A673 (cell line): ENCODE measurements at regions of chr4 and their contacts with region 1.

Region 1: DNA sequence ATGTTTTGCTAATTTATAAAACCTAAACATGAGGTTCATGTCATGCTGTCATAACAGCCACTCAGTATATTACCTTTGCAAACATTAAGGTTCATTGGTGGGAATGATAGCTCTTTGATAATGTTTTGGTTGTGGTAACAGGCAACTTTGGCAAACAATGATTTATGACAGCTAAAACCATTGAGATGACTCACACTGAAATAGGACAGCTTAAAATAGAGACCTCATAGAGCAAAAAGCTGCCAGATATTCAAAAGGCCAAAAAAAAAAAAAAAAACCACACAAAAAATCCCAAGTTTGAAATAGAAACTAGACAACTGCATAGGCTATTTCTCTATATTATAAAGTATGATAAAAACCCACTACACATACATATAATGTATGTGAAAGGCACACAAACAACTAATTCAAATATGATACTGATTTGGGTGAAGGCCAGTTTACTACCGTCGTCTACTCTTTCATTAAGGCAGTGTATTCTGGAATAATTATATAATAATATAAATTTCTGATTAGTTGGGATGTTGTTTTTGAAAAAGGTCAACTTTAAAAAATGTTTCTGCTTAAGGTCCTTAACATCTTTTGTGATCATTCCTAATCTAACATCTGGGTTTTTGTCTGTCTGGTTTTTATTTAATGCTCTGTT is 646.0 kb upstream of the PITX2 start:
- DNase-seq: peak; percentile 2
- H3K4me3 ChIP-seq: no peak overlapping the region
- H3K27ac ChIP-seq: no peak overlapping the region
- H3K4me1 ChIP-seq: no peaks in the 10 kb centered on the region
- H3K27me3 ChIP-seq: no peaks in the 10 kb centered on the region
- CTCF ChIP-seq: no peak

Region 2: DNA sequence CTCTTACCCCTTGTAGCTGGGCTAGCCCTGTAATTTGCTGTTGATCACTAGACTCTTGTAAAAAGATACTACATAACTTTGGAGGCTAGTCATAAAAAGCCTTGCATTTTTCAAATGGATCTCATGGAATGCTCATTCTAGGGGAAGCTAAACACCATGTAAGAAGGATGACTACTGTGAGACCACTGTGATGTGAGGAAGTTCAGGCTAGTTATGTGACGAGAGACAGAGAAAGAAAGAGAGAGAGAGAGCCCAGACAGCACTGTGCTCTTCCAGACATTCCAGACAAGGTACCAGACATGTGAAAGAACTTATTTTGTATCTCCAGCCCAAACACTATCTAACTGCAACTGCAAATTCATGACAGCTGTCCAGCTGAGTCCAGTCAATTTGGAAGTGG is 241.4 kb before region 1 on chr4:
- CTCF ChIA-PET with region 1: no interaction called
- POLR2A ChIA-PET with region 1: no interaction called
- intact Hi-C with region 1: no loop called
- DNase-seq: no peak
- H3K4me3 ChIP-seq: no peak overlapping the region
- H3K27ac ChIP-seq: no peak overlapping the region
- H3K4me1 ChIP-seq: no peaks in the 10 kb centered on the region
- H3K27me3 ChIP-seq: peaks cover 20% of the 10 kb centered on the region
- CTCF ChIP-seq: no peak

Region 3: GRCh38 chr4:111283061-111283677 is 14.3 kb after region 1 on chr4:
- CTCF ChIA-PET with region 1: interaction called, 15 read pairs
- POLR2A ChIA-PET with region 1: no interaction called
- intact Hi-C with region 1: no loop called
- DNase-seq: peak; percentile 67
- H3K4me3 ChIP-seq: no peak overlapping the region
- H3K27ac ChIP-seq: no peak overlapping the region
- H3K4me1 ChIP-seq: no peaks in the 10 kb centered on the region
- H3K27me3 ChIP-seq: no peaks in the 10 kb centered on the region
- CTCF ChIP-seq: peak; percentile 88